ENCODE measurements at regions of chr3 and their contacts with region 1.

Region 1: GRCh38 chr3:61561374-61562041 is at the start of gene PTPRG:
- DNase-seq: peak; percentile 90
- ATAC-seq: peak; percentile 82
- H3K4me3 ChIP-seq: peak within 1 kb of the TSS; percentile 63
- H3K27ac ChIP-seq: peak within 1 kb of the TSS; percentile 91
- H3K4me1 ChIP-seq: peaks cover 20% of the 10 kb centered on the region
- H3K27me3 ChIP-seq: no peaks in the 10 kb centered on the region
- CTCF ChIP-seq: no peak
- total RNA-seq, gene PTPRG: 86.7 TPM

Region 2: DNA sequence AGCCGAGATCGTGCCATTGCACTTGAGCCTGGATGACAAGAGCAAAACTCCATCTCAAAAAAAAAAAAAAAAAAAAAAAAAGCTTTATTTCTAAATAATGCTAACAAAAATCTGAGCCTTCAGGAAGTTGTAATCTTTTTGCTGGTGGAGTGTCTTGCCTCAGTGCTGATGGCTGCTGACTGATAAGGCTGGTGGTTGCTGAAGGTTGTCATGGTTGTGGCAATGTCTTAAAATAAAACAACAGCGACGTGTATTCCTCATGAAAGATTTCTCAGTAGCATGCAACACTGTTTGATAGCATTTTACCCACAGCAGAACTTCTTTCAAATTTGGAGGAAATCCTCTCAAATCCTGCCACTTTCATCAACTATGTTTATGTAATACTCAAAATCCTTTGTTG is 77.5 kb before region 1 on chr3:
- intact Hi-C with region 1: no loop called
- DNase-seq: no peak
- ATAC-seq: no peak
- H3K4me3 ChIP-seq: no peak overlapping the region
- H3K27ac ChIP-seq: no peak overlapping the region
- H3K4me1 ChIP-seq: no peaks in the 10 kb centered on the region
- H3K27me3 ChIP-seq: no peaks in the 10 kb centered on the region
- CTCF ChIP-seq: no peak

Region 3: DNA sequence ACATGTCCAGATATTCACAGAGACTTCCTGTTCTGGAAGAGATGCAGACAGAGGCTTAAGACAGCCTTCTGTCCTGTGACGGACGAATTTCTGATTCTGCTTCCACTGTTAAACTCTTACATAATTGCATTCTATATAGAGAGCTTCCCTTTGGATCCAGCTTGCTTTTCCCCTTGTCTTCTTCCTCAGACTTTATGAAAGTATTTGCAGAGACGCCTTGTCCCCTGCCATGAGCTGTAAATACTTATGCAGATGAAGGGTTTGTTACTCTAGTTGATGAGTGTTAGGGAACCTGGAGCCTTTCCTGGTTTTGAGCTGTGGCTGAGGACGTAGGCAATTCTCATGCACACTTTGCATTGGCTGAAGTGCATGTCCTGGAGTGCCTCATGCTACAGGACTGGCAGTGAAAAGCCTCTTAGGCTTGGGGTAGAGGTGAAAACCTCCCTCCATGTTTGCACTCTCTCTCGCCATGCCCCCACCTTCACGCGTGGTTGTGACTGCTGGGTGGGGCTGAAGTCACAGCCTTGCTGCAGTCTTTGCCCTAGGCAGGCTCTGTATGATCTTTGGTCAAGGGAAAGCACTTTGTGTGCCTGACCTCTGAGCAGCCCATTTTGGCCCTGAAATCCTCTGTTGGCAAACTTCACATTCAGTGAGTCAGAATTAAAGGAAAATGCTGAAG is 286.4 kb after region 1 on chr3:
- intact Hi-C with region 1: loop called (anchors 10 kb)
- DNase-seq: peak; percentile 84
- ATAC-seq: peak; percentile 93
- H3K4me3 ChIP-seq: no peak overlapping the region
- H3K27ac ChIP-seq: peak overlapping the region; percentile 79
- H3K4me1 ChIP-seq: peaks cover 38% of the 10 kb centered on the region
- H3K27me3 ChIP-seq: no peaks in the 10 kb centered on the region
- CTCF ChIP-seq: no peak

Region 4: DNA sequence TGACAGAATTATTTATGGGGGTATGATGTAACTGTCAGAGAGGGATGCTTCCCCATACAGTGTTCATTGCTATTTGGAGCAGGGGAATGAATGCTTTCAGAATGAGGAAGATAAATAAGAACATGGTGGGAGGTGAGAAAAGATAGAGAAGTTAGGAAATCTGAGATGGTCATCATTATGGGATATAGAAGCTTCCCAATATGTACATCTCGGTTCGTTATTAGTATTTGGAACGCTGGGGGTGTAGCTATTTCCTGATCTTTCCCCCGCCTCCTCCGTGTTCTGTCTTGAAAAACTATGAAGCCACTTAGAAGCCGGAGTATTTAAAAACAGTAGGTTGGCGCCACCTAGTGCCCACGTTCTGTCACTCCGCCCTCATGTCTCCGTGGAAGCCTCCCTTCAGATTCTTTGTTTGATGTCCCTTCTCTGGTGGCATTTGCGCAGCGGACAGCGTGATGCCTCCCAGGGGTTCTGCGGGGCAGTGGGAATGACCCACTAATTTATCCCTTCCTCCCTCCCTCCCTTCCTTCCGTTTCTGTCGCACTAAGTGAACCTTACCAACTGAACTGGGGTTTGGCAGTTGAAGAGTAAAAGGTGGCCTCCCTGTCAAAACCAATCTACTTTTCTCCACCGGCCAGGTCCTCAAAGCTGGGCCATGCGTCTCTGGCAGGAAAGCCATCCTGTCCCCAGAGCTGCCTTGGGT is 627.3 kb after region 1 on chr3:
- intact Hi-C with region 1: loop called (anchors 5 kb)
- DNase-seq: peak; percentile 75
- ATAC-seq: peak; percentile 87
- H3K4me3 ChIP-seq: no peak overlapping the region
- H3K27ac ChIP-seq: no peak overlapping the region
- H3K4me1 ChIP-seq: peaks cover 10% of the 10 kb centered on the region
- H3K27me3 ChIP-seq: no peaks in the 10 kb centered on the region
- CTCF ChIP-seq: peak; percentile 89